Ascending aorta (tissue), 2 donors: ENCODE measurements at regions of chr2 and their contacts with region 1.

Region 1: GRCh38 chr2:61910603-61911002 is 5.1 kb downstream of the COMMD1 start:
- DNase-seq: no peak
- H3K4me3 ChIP-seq: no peak overlapping the region
- H3K27ac ChIP-seq: no peak overlapping the region
- H3K4me1 ChIP-seq: peaks cover 0 to 6% of the 10 kb centered on the region in 2 donors
- H3K27me3 ChIP-seq: no peaks in the 10 kb centered on the region
- CTCF ChIP-seq: peak in 1 of 3 experiments; percentile 25

Region 2: GRCh38 chr2:61538200-61538919 is 372.2 kb before region 1 on chr2 and contains the start of gene XPO1:
- intact Hi-C with region 1: no loop called
- DNase-seq: peak; percentile 97 to 99
- H3K4me3 ChIP-seq: peak within 1 kb of the TSS; percentile 86 to 98
- H3K27ac ChIP-seq: peak within 1 kb of the TSS; percentile 96 to 98
- H3K4me1 ChIP-seq: peaks cover 0 to 16% of the 10 kb centered on the region in 2 donors
- H3K27me3 ChIP-seq: no peaks in the 10 kb centered on the region
- CTCF ChIP-seq: no peak
- total RNA-seq, gene XPO1: 47.9 TPM

Region 3: DNA sequence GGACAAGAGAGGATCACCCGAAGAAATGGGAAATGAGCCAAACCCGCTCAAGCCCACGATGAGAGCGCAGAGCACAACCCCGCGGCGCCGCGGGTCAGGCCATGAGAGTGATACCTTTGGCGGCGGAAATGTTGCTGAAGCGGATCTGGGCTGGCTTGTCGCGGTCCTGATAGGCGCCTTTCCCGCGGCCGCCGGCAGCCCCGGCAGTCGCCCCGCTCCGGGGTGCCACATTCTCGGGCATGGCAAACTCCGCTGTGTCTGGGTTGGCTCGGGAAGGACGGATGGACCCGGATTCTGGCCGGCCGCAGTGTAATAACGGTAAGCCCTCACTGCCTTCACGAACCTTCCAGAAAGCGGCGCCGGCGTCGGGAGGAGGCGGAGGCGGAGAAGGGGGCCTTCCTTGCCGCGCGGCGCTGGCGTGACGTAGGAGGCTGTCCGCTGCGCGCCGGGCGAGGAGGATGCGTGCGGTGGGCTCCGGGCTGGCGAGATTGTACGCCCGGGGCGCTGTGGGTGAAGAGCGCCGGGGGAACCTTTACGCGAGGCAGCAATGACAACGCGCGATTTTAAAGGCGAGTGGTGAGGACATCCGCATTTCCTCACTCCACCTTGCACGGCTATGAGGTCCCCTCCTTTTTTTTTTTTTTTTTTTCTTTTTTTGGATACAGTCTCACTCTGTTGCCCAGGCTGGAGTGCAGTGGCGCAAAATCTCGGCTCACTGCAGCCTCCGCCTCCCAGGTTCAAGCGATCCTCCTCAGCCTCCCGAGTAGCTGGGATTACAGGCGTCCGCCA is 22.1 kb before region 1 on chr2 and contains the start of gene CCT4:
- intact Hi-C with region 1: no loop called
- DNase-seq: peak; percentile 38 to 91
- H3K4me3 ChIP-seq: peak within 1 kb of the TSS; percentile 76 to 99
- H3K27ac ChIP-seq: peak within 1 kb of the TSS; percentile 92 to 97
- H3K4me1 ChIP-seq: peaks cover 3 to 6% of the 10 kb centered on the region in 2 donors
- H3K27me3 ChIP-seq: no peaks in the 10 kb centered on the region
- CTCF ChIP-seq: no peak
- total RNA-seq, gene CCT4: 35.3 TPM

Region 4: GRCh38 chr2:61970807-61971556 is 60.4 kb after region 1 on chr2:
- intact Hi-C with region 1: loop called (anchors 5 kb)
- DNase-seq: no peak
- H3K4me3 ChIP-seq: peak overlapping the region; percentile 28 to 60
- H3K27ac ChIP-seq: peak overlapping the region; percentile 68 to 69
- H3K4me1 ChIP-seq: peaks cover 0 to 16% of the 10 kb centered on the region in 2 donors
- H3K27me3 ChIP-seq: no peaks in the 10 kb centered on the region
- CTCF ChIP-seq: peak in 2 of 3 experiments; percentile 18 to 37

Region 5: DNA sequence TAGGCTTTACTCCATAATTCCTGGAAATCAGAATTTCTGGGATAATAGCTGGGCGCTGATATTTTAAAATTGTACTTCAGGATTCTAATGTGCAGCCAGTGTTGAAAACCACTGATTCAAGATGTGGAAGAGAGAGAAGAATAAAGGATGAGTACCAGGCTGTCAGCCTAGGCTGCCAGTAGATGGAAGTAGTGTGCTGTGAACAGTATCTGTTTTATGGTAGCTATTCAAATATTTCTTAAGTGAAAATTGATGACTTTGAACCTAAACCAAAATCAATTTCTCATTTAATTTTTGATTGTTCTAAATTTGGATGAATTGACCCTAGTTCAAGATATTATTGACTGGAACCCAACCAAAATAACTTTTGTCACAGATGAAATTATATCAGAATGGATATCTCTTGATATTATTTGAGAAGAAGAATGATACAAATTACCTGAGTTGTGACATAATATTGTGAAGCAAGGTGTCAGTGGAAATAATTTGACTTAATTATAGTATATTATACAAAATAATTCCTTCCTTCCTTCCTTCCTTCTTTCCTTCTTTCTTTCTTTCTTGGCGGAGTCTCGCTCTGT is 82.9 kb after region 1 on chr2:
- intact Hi-C with region 1: loop called (anchors 5 kb)
- DNase-seq: no peak
- H3K4me3 ChIP-seq: no peak overlapping the region
- H3K27ac ChIP-seq: no peak overlapping the region
- H3K4me1 ChIP-seq: no peaks in the 10 kb centered on the region
- H3K27me3 ChIP-seq: no peaks in the 10 kb centered on the region
- CTCF ChIP-seq: peak; percentile 40 to 59 (median 43)

Region 6: GRCh38 chr2:62014102-62014501 is 103.5 kb after region 1 on chr2:
- intact Hi-C with region 1: loop called (anchors 5 kb)
- DNase-seq: peak; percentile 19 to 92
- H3K4me3 ChIP-seq: no peak overlapping the region
- H3K27ac ChIP-seq: peak overlapping the region; percentile 49 to 52
- H3K4me1 ChIP-seq: peaks cover 3 to 4% of the 10 kb centered on the region in 2 donors
- H3K27me3 ChIP-seq: no peaks in the 10 kb centered on the region
- CTCF ChIP-seq: peak in 2 of 3 experiments; percentile 14 to 20

Region 7: DNA sequence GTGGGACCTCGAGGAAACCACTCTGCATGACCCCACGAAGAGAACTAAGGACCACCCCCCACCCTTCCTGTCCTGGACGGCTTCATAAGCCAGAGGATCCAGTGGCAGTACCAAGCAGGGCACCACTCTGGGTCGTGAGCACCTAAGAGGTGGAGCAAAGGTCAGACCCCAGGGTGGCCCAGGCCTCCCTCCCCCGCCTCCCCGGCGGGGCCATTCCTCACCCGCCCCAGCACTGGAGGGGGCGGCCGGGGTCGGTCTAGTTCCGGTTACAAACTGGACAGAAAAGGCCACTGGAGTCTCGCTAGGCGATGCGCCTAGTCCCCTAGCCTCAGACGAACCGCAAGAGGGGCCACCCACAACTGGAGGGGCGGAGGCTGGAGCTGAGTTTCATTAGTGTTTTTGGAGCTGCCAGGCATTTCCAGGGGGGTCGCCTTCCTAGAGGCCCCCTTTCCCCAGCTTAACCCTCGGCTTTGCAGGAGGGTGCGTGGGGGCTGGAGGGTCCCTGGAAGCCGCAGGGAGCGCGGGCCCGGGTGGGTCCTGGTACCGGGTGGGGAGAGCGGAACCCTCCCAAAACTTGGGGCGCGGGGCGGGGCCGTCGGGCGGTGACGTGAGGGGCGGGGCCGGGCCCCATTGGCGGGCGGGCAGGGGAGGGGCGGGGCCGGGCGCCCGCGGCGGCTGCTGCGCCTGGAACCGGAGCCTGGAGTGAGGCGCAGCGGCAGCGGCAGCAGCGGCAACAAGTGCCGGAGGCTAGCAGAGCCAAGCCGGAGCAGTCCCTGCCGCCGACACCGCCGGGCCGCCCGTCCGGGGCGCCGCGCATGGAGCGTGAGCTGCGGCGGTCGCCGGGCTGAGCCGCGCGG is 285.0 kb after region 1 on chr2 and contains the start of gene B3GNT2:
- intact Hi-C with region 1: loop called (anchors 5 kb)
- DNase-seq: peak in 1 of 2 donors; percentile 88
- H3K4me3 ChIP-seq: peak within 1 kb of the TSS; percentile 90 to 97
- H3K27ac ChIP-seq: peak within 1 kb of the TSS; percentile 90 to 91
- H3K4me1 ChIP-seq: peaks cover 0 to 21% of the 10 kb centered on the region in 2 donors
- H3K27me3 ChIP-seq: no peaks in the 10 kb centered on the region
- CTCF ChIP-seq: no peak
- total RNA-seq, gene B3GNT2: 15.2 TPM

Region 8: GRCh38 chr2:62540408-62541168 is 630.0 kb after region 1 on chr2:
- intact Hi-C with region 1: no loop called
- DNase-seq: no peak
- H3K4me3 ChIP-seq: no peak overlapping the region
- H3K27ac ChIP-seq: no peak overlapping the region
- H3K4me1 ChIP-seq: no peaks in the 10 kb centered on the region
- H3K27me3 ChIP-seq: no peaks in the 10 kb centered on the region
- CTCF ChIP-seq: no peak

Region 9: GRCh38 chr2:62774555-62775366 is 864.2 kb after region 1 on chr2:
- intact Hi-C with region 1: loop called (anchors 10 kb)
- DNase-seq: no peak
- H3K4me3 ChIP-seq: no peak overlapping the region
- H3K27ac ChIP-seq: no peak overlapping the region
- H3K4me1 ChIP-seq: peaks cover 0 to 4% of the 10 kb centered on the region in 2 donors
- H3K27me3 ChIP-seq: no peaks in the 10 kb centered on the region
- CTCF ChIP-seq: peak; percentile 62 to 84 (median 63)